Activated B cell treated with CpG ODN at 0.5 μM for 24 hours (primary cell): ENCODE measurements at regions of chr10 and their contacts with region 1.

Region 1: DNA sequence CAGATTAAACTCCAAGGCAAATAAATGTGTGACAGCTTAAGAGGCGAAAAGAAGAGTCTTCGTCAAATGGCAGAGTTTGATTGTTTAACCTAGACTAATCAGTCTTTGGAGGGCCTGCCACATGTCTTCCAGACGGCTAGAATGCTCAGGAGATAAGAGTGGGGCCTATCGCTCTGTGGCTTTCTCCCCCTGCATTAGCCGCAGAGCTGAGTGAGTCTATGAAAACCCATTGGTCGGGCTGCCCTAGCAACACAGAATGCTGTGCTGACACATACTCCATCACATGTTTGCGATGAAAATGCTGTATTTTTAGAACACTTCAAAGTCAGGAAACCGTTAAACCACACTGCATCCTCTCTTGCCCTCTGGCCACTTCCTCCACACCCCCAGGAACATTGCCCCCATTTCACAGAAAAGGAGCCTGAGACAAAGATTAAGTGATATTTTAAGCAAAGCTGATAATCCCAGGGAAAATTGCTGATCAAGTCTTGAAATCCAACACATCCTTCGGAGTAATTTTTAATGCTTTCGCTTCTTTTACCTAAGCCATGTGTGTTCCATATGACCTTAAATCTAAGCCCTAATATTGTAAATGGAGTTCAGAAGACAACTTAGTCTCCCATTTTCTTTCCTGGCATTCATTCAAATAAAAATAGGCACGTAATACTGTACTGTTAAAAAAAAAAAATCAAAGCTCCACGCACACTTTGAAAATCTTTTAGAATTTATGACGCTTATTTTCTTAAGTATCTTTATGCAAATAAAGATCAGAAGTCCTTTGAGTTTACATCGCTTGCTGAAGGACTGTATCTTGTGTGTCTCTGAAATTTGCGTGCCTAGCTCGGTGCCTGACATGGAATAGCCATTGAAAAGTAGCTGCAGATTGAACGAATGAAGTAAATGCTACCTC is 161.2 kb downstream of the CELF2 start:
- DNase-seq: peak; percentile 43
- ATAC-seq: peak; percentile 75
- H3K4me3 Mint-ChIP-seq: peak overlapping the region; percentile 80
- H3K27ac Mint-ChIP-seq: peak overlapping the region; percentile 94
- H3K4me1 Mint-ChIP-seq: peaks cover 30% of the 10 kb centered on the region
- H3K27me3 Mint-ChIP-seq: no peaks in the 10 kb centered on the region
- CTCF ChIP-seq: no peak

Region 2: GRCh38 chr10:10985361-10985760 is 193.5 kb before region 1 on chr10:
- CTCF ChIA-PET with region 1: no interaction called
- POLR2A ChIA-PET with region 1: no interaction called
- intact Hi-C with region 1: no loop called
- DNase-seq: no peak
- ATAC-seq: no peak
- H3K4me3 Mint-ChIP-seq: no peak overlapping the region
- H3K27ac Mint-ChIP-seq: no peak overlapping the region
- H3K4me1 Mint-ChIP-seq: no peaks in the 10 kb centered on the region
- H3K27me3 Mint-ChIP-seq: peaks cover 25% of the 10 kb centered on the region
- CTCF ChIP-seq: no peak

Region 3: GRCh38 chr10:11197266-11197712 is 18.4 kb after region 1 on chr10:
- CTCF ChIA-PET with region 1: no interaction called
- POLR2A ChIA-PET with region 1: interaction called, 8 read pairs
- intact Hi-C with region 1: loop called (anchors 1 kb)
- DNase-seq: no peak
- ATAC-seq: peak; percentile 82
- H3K4me3 Mint-ChIP-seq: peak overlapping the region; percentile 81
- H3K27ac Mint-ChIP-seq: peak overlapping the region; percentile 94
- H3K4me1 Mint-ChIP-seq: peaks cover 97% of the 10 kb centered on the region
- H3K27me3 Mint-ChIP-seq: no peaks in the 10 kb centered on the region
- CTCF ChIP-seq: no peak

Region 4: DNA sequence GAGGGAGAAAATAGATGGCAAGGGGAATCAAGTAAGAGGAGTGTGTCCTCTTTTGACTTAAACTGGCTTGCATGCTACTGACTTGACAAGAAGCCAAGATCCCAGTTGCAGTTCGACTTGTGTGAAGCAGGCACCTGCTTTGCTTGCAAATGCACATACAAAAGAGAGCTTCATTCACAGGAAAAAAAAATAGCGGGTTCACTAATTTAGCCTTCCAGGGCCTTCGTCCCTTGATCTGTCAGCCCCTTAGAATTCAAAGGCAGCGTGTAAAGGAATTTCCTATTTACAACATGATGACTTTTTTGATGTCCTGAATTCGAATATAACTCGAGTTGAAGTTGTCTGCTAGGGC is 30.9 kb after region 1 on chr10:
- CTCF ChIA-PET with region 1: no interaction called
- POLR2A ChIA-PET with region 1: interaction called, 7 read pairs
- intact Hi-C with region 1: loop called (anchors 1 kb)
- DNase-seq: no peak
- ATAC-seq: peak; percentile 30
- H3K4me3 Mint-ChIP-seq: peak overlapping the region; percentile 78
- H3K27ac Mint-ChIP-seq: peak overlapping the region; percentile 92
- H3K4me1 Mint-ChIP-seq: peaks cover 96% of the 10 kb centered on the region
- H3K27me3 Mint-ChIP-seq: no peaks in the 10 kb centered on the region
- CTCF ChIP-seq: no peak

Region 5: DNA sequence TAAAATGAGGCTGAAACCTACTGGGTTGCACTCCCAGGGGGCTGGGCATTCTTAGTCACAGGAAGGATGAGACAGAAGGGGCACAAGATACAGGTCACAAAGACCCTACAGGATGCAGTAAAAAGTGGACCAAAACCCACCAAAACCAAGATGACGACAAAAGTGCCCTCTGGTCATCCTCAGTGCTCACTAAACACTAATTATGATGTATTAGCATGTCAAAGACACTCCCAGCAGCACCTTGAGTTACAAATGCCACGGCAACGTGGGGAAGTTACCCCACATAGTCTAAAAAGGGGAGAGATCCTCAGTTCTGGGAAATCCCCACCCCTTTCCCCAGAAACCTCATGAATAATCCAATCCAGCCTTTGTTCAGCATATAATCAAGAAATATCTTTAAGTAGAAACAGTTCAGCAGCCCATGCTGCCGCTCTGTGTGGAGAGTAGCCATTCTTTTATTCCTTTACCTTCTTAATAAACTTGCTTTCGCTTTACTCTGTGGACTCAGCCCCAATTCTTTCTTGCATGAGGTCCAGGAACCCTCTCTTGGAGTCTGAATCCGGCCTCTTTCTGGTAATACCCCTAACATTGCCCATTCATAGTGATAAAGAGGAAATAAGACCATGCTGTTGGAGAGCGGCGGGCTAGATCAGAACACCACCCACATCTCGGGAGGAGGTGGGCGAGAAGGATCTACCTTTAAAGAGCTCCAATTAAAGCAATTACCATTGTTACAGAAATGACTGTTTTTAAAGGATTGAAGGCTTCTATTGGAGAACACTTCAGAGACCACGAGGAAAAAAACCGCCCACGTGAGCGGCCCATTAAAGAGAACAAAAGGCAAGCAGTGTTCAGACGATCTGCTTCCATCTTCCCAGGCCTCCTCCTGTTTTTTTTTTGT is 261.6 kb after region 1 on chr10:
- CTCF ChIA-PET with region 1: no interaction called
- POLR2A ChIA-PET with region 1: no interaction called
- intact Hi-C with region 1: loop called (anchors 5 kb)
- DNase-seq: no peak
- ATAC-seq: peak; percentile 82
- H3K4me3 Mint-ChIP-seq: peak overlapping the region; percentile 64
- H3K27ac Mint-ChIP-seq: peak overlapping the region; percentile 81
- H3K4me1 Mint-ChIP-seq: peaks cover 33% of the 10 kb centered on the region
- H3K27me3 Mint-ChIP-seq: no peaks in the 10 kb centered on the region
- CTCF ChIP-seq: no peak